ENCODE measurements at regions of chr7 and their contacts with region 1.

Region 1: GRCh38 chr7:44240983-44241510 is 40.3 kb downstream of the YKT6 start:
- DNase-seq: peak in 3 of 4 donors; percentile 56 to 83 (median 71)
- ATAC-seq: peak; percentile 96
- H3K4me3 ChIP-seq: no peak overlapping the region
- H3K27ac ChIP-seq: no peak overlapping the region
- H3K4me1 ChIP-seq: no peaks in the 10 kb centered on the region
- H3K27me3 ChIP-seq: peaks cover 0 to 24% of the 10 kb centered on the region in 2 donors
- CTCF ChIP-seq: peak; percentile 52 to 66

Region 2: DNA sequence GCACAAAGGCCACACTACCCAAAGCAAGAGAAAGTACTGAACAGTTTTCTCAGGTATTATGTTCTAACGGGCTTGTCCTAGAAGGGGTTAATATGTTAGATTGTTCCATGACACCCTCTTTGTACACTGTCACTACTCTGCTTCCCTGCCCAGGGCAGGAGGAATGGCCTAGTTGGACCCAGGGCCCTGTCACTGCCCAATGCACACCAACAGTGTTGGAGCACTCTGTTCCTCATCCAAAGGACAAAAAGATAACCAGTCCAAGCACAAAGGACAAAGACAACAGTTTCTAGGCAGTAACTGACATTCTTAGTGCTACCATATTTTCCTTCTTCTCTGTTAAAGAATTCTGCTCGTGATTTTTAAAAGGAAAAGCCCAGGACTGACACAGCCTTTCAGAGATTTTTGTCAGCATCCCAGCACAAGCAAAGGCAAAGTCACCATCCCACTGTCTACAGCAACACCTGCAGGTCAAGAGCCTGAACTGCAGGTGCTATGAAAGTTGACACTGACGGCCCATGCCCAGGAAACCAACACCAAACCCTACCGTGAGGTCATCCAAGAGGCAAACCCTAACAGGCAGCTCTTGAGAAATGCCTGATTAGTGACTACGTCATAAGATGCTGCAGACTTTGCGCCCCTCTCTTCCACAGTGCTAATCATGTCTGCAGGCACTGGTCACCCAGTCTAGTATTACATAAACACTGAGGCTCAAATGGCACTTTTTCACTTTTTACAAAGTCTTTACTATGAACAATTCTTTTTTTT is 236.2 kb after region 1 on chr7:
- intact Hi-C with region 1: loop called in 1 of 2 experiments (anchors 5 kb)
- DNase-seq: peak in 3 of 4 donors; percentile 22 to 64 (median 41)
- ATAC-seq: peak; percentile 99
- H3K4me3 ChIP-seq: no peak overlapping the region
- H3K27ac ChIP-seq: no peak overlapping the region
- H3K4me1 ChIP-seq: no peaks in the 10 kb centered on the region
- H3K27me3 ChIP-seq: no peaks in the 10 kb centered on the region
- CTCF ChIP-seq: peak; percentile 84 to 88

Region 3: GRCh38 chr7:44565097-44565794 is 324.2 kb after region 1 on chr7:
- intact Hi-C with region 1: loop called in 1 of 2 experiments (anchors 5 kb)
- DNase-seq: peak in 3 of 4 donors; percentile 40 to 91 (median 52)
- ATAC-seq: peak; percentile 96
- H3K4me3 ChIP-seq: no peak overlapping the region
- H3K27ac ChIP-seq: no peak overlapping the region
- H3K4me1 ChIP-seq: peaks cover 0 to 4% of the 10 kb centered on the region in 2 donors
- H3K27me3 ChIP-seq: no peaks in the 10 kb centered on the region
- CTCF ChIP-seq: peak; percentile 91 to 97